PC-3 (cell line): ENCODE measurements at regions of chr4 and their contacts with region 1.

Region 1: DNA sequence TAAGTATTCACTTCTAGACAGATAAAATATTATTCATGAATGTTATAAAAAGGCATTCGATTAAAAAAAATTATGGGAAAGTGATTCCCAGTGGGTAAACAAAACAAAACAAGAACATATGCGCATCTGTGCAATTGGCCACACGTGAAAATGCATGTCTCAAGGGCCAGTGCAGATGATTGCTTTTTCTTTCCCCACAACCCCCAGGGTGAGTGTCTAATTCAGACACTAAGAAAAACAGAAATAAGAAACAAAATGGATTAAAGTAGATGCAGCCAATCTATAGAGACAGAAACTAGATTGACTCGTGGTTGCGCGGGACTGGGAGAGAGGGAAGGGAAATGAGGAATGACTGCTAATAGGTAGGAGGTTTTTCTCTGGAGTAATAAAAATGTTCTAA is 49.5 kb downstream of the GPM6A start:
- DNase-seq: no peak
- ATAC-seq: no peak
- H3K4me3 ChIP-seq: no peak overlapping the region
- H3K27ac ChIP-seq: no peak overlapping the region
- H3K4me1 ChIP-seq: no peaks in the 10 kb centered on the region
- H3K27me3 ChIP-seq: no peaks in the 10 kb centered on the region
- CTCF ChIP-seq: no peak

Region 2: GRCh38 chr4:175657571-175657970 is 105.0 kb before region 1 on chr4:
- CTCF ChIA-PET with region 1: no interaction called
- POLR2A ChIA-PET with region 1: no interaction called
- intact Hi-C with region 1: loop called (anchors 10 kb)
- DNase-seq: peak; percentile 51
- ATAC-seq: peak; percentile 50; the same call in 1 of the 2 replicates
- H3K4me3 ChIP-seq: no peak overlapping the region
- H3K27ac ChIP-seq: no peak overlapping the region
- H3K4me1 ChIP-seq: peaks cover 5% of the 10 kb centered on the region; the same call in 1 of the 2 replicates
- H3K27me3 ChIP-seq: no peaks in the 10 kb centered on the region
- CTCF ChIP-seq: peak; percentile 28

Region 3: DNA sequence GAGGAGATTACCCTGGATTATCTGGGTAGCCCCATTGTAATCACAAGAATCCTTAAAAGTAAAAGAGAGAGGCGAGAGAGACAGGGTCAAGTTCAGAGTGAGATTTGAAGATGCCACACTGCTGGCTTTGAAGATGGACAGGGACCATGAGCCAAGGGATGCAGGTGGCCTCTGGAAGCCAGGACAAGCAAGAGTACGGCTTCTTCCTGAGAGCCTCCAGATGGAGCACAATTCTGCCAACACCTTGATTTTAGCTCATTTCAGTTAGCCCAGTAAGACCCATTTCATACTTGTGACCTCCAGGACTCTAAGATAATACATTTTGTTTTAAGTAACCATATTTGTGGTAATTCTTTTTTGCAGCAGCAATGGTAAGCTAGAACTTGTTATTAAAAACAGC is 70.8 kb before region 1 on chr4:
- CTCF ChIA-PET with region 1: no interaction called
- POLR2A ChIA-PET with region 1: no interaction called
- intact Hi-C with region 1: no loop called
- DNase-seq: no peak
- ATAC-seq: no peak
- H3K4me3 ChIP-seq: no peak overlapping the region
- H3K27ac ChIP-seq: no peak overlapping the region
- H3K4me1 ChIP-seq: no peaks in the 10 kb centered on the region
- H3K27me3 ChIP-seq: no peaks in the 10 kb centered on the region
- CTCF ChIP-seq: no peak